ENCODE measurements at regions of chr11 and their contacts with region 1.

Region 1: DNA sequence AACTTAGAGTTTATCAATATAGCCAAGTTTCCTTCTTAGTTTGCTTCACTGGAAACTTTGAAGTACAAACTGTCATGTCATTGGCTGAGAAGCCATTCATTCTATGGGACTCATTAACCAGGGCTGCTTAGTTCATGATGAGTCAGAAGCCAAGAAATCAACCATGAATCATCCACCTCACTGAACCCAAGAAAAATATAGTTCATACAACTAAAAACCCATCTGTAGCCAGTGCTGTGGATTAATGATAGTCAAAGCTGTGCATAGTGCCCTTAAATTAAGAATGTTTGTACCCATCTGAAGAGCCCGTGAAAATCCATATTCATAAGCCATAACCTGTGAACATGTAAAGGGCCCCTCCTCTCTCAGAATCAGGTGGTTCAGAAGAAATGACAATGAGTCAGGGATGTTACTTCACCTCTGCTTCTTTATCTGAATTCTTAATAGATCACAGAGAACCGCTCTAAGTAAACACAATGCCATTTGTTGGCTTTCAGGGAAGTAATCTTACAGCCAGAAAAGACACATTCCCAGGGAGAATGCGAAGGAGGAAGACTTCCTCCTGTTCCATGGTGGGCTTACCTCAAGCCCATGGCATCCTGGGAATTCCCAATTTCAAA is 25.4 kb downstream of the MMP20 start:
- DNase-seq: peak; percentile 96
- ATAC-seq: peak; percentile 96
- H3K4me3 ChIP-seq: peak overlapping the region; percentile 41; the same call in 1 of the 2 replicates
- H3K27ac ChIP-seq: peak overlapping the region; percentile 91
- H3K4me1 ChIP-seq: peaks cover 30% of the 10 kb centered on the region
- H3K27me3 ChIP-seq: no peaks in the 10 kb centered on the region
- CTCF ChIP-seq: no peak

Region 2: GRCh38 chr11:102560555-102561011 is 39.2 kb before region 1 on chr11:
- CTCF ChIA-PET with region 1: no interaction called
- POLR2A ChIA-PET with region 1: no interaction called
- intact Hi-C with region 1: loop called (anchors 1 kb)
- DNase-seq: peak; percentile 65
- ATAC-seq: peak; percentile 44
- H3K4me3 ChIP-seq: peak overlapping the region; percentile 60
- H3K27ac ChIP-seq: peak overlapping the region; percentile 55
- H3K4me1 ChIP-seq: peaks cover 43% of the 10 kb centered on the region
- H3K27me3 ChIP-seq: no peaks in the 10 kb centered on the region
- CTCF ChIP-seq: no peak

Measured in PC-3 (cell line).